Naive thymus-derived CD4-positive, alpha-beta T cell (primary cell): ENCODE measurements at regions of chr3 and their contacts with region 1.

Region 1: DNA sequence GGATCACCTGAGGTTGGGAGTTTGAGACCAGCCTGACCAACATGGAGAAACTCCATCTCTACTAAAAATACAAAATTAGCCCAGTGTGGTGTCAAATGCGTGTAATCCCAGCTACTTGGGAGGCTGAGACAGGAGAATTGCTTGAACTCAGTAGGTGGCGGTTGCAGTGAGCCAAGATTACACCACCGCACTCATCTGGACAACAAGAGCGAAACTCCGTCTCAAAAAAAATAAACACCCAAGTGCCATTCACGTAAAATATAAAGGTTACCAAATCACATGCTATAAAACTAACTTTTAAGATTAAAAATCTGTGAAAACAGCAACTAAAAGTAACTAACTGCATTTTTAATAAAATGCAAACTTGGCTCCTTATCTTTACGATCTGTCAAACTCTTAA is 8.9 kb downstream of the TRIM59 start:
- DNase-seq: no peak
- ATAC-seq: no peak
- H3K4me3 ChIP-seq: no peak overlapping the region
- H3K4me3 Mint-ChIP-seq: peak overlapping the region in 1 of 10 donors; percentile 29
- H3K27ac ChIP-seq: no peak overlapping the region
- H3K27ac Mint-ChIP-seq: peak overlapping the region in 2 of 9 donors; percentile 36 to 66
- H3K4me1 ChIP-seq: peaks cover 0 to 4% of the 10 kb centered on the region in 2 donors
- H3K4me1 Mint-ChIP-seq: peaks cover 22 to 71% (median 46%) of the 10 kb centered on the region in 7 donors
- H3K27me3 ChIP-seq: no peaks in the 10 kb centered on the region
- H3K27me3 Mint-ChIP-seq: no peaks in the 10 kb centered on the region

Region 2: DNA sequence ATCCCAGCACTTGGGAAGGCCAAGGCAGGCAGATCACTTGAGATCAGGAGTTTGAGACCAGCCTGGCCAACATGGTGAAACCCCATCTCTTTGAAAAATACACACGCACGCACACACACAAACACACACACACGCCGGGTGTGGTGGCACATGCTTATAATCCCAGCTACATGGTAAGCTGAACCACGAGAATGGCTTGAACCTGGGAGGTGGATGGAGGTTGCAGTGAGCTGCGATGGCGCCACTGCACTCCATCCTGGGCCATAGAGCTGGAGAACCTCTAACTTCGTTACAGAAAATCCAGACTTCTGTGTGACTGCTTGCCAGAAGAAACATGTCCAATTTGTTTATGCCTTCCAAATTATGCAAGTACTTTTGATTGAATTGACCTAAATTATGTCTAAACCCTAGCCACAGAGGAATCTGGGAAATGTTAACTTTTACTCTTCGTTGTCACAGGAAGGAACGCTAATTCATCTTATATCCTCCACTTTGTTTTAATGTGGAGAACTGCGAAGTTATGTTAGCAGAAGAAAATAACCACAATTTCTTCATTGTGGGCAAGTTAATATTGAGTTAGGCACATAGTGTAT is 12.8 kb before region 1 on chr3:
- CTCF ChIA-PET with region 1: no interaction called
- POLR2A ChIA-PET with region 1: no interaction called
- intact Hi-C with region 1: loop called in 1 of 2 experiments (anchors 2 kb)
- DNase-seq: no peak
- ATAC-seq: no peak
- H3K4me3 ChIP-seq: no peak overlapping the region
- H3K4me3 Mint-ChIP-seq: no peak overlapping the region
- H3K27ac ChIP-seq: no peak overlapping the region
- H3K27ac Mint-ChIP-seq: peak overlapping the region in 1 of 9 donors; percentile 13
- H3K4me1 ChIP-seq: no peaks in the 10 kb centered on the region
- H3K4me1 Mint-ChIP-seq: peaks cover 0 to 22% (median 2%) of the 10 kb centered on the region in 7 donors
- H3K27me3 ChIP-seq: no peaks in the 10 kb centered on the region
- H3K27me3 Mint-ChIP-seq: no peaks in the 10 kb centered on the region

Region 3: GRCh38 chr3:160725338-160725737 is 284.7 kb after region 1 on chr3:
- CTCF ChIA-PET with region 1: no interaction called
- POLR2A ChIA-PET with region 1: no interaction called
- intact Hi-C with region 1: no loop called
- DNase-seq: no peak
- ATAC-seq: no peak
- H3K4me3 ChIP-seq: no peak overlapping the region
- H3K4me3 Mint-ChIP-seq: no peak overlapping the region
- H3K27ac ChIP-seq: no peak overlapping the region
- H3K27ac Mint-ChIP-seq: no peak overlapping the region
- H3K4me1 ChIP-seq: no peaks in the 10 kb centered on the region
- H3K4me1 Mint-ChIP-seq: no peaks in the 10 kb centered on the region
- H3K27me3 ChIP-seq: no peaks in the 10 kb centered on the region
- H3K27me3 Mint-ChIP-seq: peaks cover 0 to 17% (median 13%) of the 10 kb centered on the region in 5 donors